Esophagus muscularis mucosa (tissue), 4 donors: ENCODE measurements at regions of chr7 and their contacts with region 1.

Region 1: DNA sequence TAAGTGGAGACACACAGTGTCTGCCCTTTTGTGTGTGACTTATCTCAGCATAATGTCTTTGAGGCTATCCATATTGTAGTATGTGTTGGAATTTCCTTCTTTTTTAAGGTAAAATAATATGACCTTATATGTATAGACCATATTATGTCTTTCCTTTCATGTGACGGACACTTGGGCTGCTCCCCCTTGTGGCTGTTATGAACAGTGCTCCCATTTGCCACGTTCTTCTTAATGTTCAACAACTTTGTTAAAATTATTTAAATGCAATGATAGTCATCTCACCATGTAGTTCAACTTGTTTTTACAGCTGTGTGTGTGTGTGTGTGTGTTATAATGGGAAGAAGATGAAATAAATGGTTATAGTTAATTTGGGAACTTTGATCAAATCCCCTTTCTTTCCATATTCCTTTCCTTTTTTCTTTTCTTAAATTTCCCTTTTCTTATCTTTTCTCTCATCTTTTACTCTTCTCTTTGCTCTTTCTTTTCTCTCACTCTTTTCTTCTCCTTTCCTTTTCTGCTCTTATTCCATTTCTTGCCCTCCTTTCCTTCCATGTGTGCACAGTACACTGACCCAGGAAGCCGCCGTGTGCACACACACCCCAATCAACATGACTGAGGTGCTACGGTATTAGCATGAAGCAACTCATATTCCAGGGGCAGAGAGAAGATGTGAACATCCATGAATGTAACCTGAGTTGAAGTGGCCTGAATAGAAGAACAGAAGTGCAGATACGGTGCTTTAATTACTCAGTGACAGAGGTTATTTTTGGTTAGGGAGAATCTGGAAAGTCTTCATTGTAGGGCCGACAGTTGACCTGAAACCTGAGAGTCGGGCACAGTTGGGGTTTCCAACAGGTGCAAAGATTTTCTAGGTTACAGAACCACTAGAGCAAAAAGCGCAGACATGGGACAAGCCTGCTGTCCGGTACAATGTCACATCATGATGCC is 596.7 kb downstream of the SDK1 start:
- DNase-seq: peak; percentile 74
- H3K4me3 ChIP-seq: no peak overlapping the region
- H3K27ac ChIP-seq: no peak overlapping the region
- H3K4me1 ChIP-seq: no peaks in the 10 kb centered on the region
- H3K27me3 ChIP-seq: no peaks in the 10 kb centered on the region
- CTCF ChIP-seq: peak; percentile 71 to 83 (median 74)
- EP300 ChIP-seq: no peak
- POLR2A ChIP-seq: no peak

Region 2: GRCh38 chr7:3300651-3301378 is 596.9 kb before region 1 on chr7 and contains the start of gene SDK1:
- intact Hi-C with region 1: loop called (anchors 2 kb)
- DNase-seq: peak; percentile 94
- H3K4me3 ChIP-seq: peak within 1 kb of the TSS; percentile 64 to 91 (median 70)
- H3K27ac ChIP-seq: peak within 1 kb of the TSS; percentile 45 to 66 (median 64)
- H3K4me1 ChIP-seq: peaks cover 8 to 29% (median 27%) of the 10 kb centered on the region in 4 donors
- H3K27me3 ChIP-seq: peaks cover 0 to 8% (median 0%) of the 10 kb centered on the region in 4 donors
- CTCF ChIP-seq: peak; percentile 93 to 96 (median 95)
- EP300 ChIP-seq: no peak
- POLR2A ChIP-seq: no peak
- total RNA-seq, gene SDK1: 7.8 to 18.6 (median 12.0) TPM